IMR-90 (cell line): ENCODE measurements at regions of chr4 and their contacts with region 1.

Region 1: GRCh38 chr4:53196882-53197771 is 168.7 kb downstream of the SCFD2 start:
- DNase-seq: peak; percentile 90
- ATAC-seq: peak; percentile 82
- H3K4me3 ChIP-seq: peak overlapping the region; percentile 22; the same call in 1 of the 2 replicates
- H3K27ac ChIP-seq: peak overlapping the region; percentile 56; the same call in 1 of the 2 replicates
- H3K4me1 ChIP-seq: no peaks in the 10 kb centered on the region
- H3K27me3 ChIP-seq: no peaks in the 10 kb centered on the region
- CTCF ChIP-seq: peak; percentile 80
- POLR2A ChIP-seq: no peak
- RAD21 ChIP-seq: peak; percentile 85

Region 2: GRCh38 chr4:53015681-53016080 is 181.4 kb before region 1 on chr4:
- CTCF ChIA-PET with region 1: no interaction called
- POLR2A ChIA-PET with region 1: no interaction called
- dilution Hi-C with region 1: no loop called
- in situ Hi-C with region 1: loop called (anchors 10 kb)
- intact Hi-C with region 1: loop called (anchors 2 kb)
- DNase-seq: peak; percentile 81
- ATAC-seq: peak; percentile 44; the same call in 1 of the 2 replicates
- H3K4me3 ChIP-seq: no peak overlapping the region
- H3K27ac ChIP-seq: no peak overlapping the region
- H3K4me1 ChIP-seq: peaks cover 28% of the 10 kb centered on the region
- H3K27me3 ChIP-seq: no peaks in the 10 kb centered on the region
- CTCF ChIP-seq: peak; percentile 81
- POLR2A ChIP-seq: no peak
- RAD21 ChIP-seq: peak; percentile 93

Region 3: GRCh38 chr4:53476232-53477037 is 279.3 kb after region 1 on chr4:
- CTCF ChIA-PET with region 1: no interaction called
- POLR2A ChIA-PET with region 1: no interaction called
- dilution Hi-C with region 1: no loop called
- in situ Hi-C with region 1: no loop called
- intact Hi-C with region 1: loop called (anchors 5 kb)
- DNase-seq: peak; percentile 98
- ATAC-seq: peak; percentile 87
- H3K4me3 ChIP-seq: no peak overlapping the region
- H3K27ac ChIP-seq: peak overlapping the region; percentile 93
- H3K4me1 ChIP-seq: peaks cover 20% of the 10 kb centered on the region
- H3K27me3 ChIP-seq: no peaks in the 10 kb centered on the region
- CTCF ChIP-seq: no peak
- POLR2A ChIP-seq: no peak
- RAD21 ChIP-seq: no peak

Region 4: DNA sequence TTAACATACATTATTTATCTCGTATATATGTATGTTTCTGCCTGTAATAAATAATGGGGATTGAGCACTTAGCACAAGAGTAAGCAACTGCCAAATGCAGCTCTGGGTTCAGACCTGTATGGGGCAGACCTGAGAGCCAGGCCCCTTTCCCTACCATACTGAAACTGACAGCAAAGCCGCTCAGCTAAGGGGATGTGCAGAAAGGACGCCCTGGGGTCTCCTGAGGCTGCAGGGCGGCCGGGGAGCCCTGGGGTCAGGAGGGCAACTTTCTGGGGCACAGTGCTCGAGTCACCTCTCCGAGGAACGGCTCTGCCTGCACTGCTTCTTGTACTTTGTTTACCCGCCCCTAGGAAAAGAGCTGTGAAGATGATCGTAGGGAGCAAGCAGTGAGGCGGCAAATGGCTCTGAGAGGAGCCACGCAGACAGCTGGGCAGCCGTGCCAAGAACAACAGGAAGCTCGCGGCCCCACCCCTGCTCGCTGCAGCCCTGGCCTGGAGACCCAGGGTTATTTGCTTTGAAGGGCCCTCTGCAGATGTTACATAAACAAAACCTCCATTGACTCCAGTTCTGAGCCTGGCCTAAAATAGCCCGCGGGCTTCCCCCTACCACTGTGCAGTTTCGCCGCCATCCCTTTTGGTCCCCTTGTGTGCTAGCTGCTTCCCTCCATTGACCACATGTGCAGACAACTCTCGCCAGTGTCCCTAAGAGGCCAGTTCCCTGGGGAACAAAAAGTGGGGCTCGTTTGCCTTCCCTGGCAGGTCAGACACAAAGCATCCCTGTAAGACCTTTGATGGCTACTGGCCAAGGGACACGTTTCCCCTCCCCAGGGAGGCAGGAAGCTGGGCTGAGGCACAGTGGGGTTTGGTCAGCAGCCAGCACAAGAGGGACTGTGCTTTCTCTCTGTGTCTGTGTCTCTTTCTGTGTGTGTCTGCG is 505.5 kb after region 1 on chr4:
- CTCF ChIA-PET with region 1: interaction called, 3 read pairs
- POLR2A ChIA-PET with region 1: no interaction called
- dilution Hi-C with region 1: no loop called
- in situ Hi-C with region 1: loop called (anchors 25 kb)
- intact Hi-C with region 1: loop called (anchors 5 kb)
- DNase-seq: peak; percentile 77
- ATAC-seq: peak; percentile 83
- H3K4me3 ChIP-seq: no peak overlapping the region
- H3K27ac ChIP-seq: peak overlapping the region; percentile 86
- H3K4me1 ChIP-seq: peaks cover 22% of the 10 kb centered on the region
- H3K27me3 ChIP-seq: no peaks in the 10 kb centered on the region
- CTCF ChIP-seq: 0 out of 2 replicates have a peak, but pooled peaks have one; percentile 10
- POLR2A ChIP-seq: no peak
- RAD21 ChIP-seq: peak; percentile 4; the same call in 1 of the 2 replicates

Region 5: DNA sequence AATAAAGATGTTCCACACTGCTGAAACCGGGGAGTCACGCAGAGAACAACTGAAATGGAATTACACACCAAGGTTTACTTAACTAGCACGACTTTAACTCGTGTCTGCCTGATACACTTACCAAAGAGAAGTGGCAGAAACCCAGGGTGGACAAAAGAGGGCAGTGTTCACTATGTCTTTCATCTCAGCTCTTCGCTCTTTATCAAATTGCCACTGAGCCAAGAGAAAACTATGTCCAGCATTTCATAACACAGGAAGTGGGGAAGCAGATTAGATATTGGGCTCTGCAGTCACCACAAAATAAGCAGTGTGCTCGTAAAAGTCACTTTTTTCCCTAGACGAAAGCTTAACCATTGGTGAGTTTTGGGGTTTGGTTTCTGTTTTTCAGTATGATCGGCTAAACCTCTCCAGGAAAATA is 711.5 kb after region 1 on chr4:
- CTCF ChIA-PET with region 1: interaction called, 3 read pairs
- POLR2A ChIA-PET with region 1: no interaction called
- dilution Hi-C with region 1: no loop called
- in situ Hi-C with region 1: loop called (anchors 25 kb)
- intact Hi-C with region 1: loop called (anchors 1 kb)
- DNase-seq: peak; percentile 97
- ATAC-seq: peak; percentile 70
- H3K4me3 ChIP-seq: peak overlapping the region; percentile 22; the same call in 1 of the 2 replicates
- H3K27ac ChIP-seq: peak overlapping the region; percentile 96
- H3K4me1 ChIP-seq: peaks cover 11% of the 10 kb centered on the region
- H3K27me3 ChIP-seq: no peaks in the 10 kb centered on the region
- CTCF ChIP-seq: peak; percentile 95
- POLR2A ChIP-seq: peak; percentile 48; the same call in 1 of the 2 replicates
- RAD21 ChIP-seq: peak; percentile 93